ENCODE measurements at regions of chr2 and their contacts with region 1.

Region 1: GRCh38 chr2:98702127-98702802 is 28.7 kb downstream of the MGAT4A start:
- DNase-seq: no peak
- H3K4me3 ChIP-seq: no peak overlapping the region
- H3K4me3 Mint-ChIP-seq: peak overlapping the region; percentile 27 to 76 (median 68)
- H3K27ac ChIP-seq: peak overlapping the region; percentile 29
- H3K27ac Mint-ChIP-seq: peak overlapping the region; percentile 30 to 90 (median 81)
- H3K4me1 ChIP-seq: peaks cover 83% of the 10 kb centered on the region
- H3K4me1 Mint-ChIP-seq: peaks cover 60 to 84% (median 73%) of the 10 kb centered on the region in 4 donors
- H3K27me3 ChIP-seq: no peaks in the 10 kb centered on the region
- H3K27me3 Mint-ChIP-seq: no peaks in the 10 kb centered on the region

Region 2: GRCh38 chr2:98524168-98524567 is 178.1 kb before region 1 on chr2:
- CTCF ChIA-PET with region 1: no interaction called
- POLR2A ChIA-PET with region 1: no interaction called
- intact Hi-C with region 1: no loop called
- DNase-seq: no peak
- H3K4me3 ChIP-seq: no peak overlapping the region
- H3K4me3 Mint-ChIP-seq: no peak overlapping the region
- H3K27ac ChIP-seq: no peak overlapping the region
- H3K27ac Mint-ChIP-seq: peak overlapping the region in 1 of 7 donors; percentile 18
- H3K4me1 ChIP-seq: no peaks in the 10 kb centered on the region
- H3K4me1 Mint-ChIP-seq: peaks cover 7 to 12% (median 11%) of the 10 kb centered on the region in 4 donors
- H3K27me3 ChIP-seq: no peaks in the 10 kb centered on the region
- H3K27me3 Mint-ChIP-seq: no peaks in the 10 kb centered on the region

Region 3: GRCh38 chr2:98654699-98655495 is 47.4 kb before region 1 on chr2:
- CTCF ChIA-PET with region 1: interaction called, 8 read pairs
- POLR2A ChIA-PET with region 1: interaction called, 5 read pairs
- intact Hi-C with region 1: loop called (anchors 5 kb)
- DNase-seq: peak; percentile 47 to 67 (median 50)
- H3K4me3 ChIP-seq: no peak overlapping the region
- H3K4me3 Mint-ChIP-seq: peak overlapping the region; percentile 19 to 73 (median 55)
- H3K27ac ChIP-seq: peak overlapping the region; percentile 55
- H3K27ac Mint-ChIP-seq: peak overlapping the region; percentile 88 to 94 (median 93)
- H3K4me1 ChIP-seq: peaks cover 93% of the 10 kb centered on the region
- H3K4me1 Mint-ChIP-seq: peaks cover 65 to 95% (median 80%) of the 10 kb centered on the region in 4 donors
- H3K27me3 ChIP-seq: no peaks in the 10 kb centered on the region
- H3K27me3 Mint-ChIP-seq: no peaks in the 10 kb centered on the region

Region 4: DNA sequence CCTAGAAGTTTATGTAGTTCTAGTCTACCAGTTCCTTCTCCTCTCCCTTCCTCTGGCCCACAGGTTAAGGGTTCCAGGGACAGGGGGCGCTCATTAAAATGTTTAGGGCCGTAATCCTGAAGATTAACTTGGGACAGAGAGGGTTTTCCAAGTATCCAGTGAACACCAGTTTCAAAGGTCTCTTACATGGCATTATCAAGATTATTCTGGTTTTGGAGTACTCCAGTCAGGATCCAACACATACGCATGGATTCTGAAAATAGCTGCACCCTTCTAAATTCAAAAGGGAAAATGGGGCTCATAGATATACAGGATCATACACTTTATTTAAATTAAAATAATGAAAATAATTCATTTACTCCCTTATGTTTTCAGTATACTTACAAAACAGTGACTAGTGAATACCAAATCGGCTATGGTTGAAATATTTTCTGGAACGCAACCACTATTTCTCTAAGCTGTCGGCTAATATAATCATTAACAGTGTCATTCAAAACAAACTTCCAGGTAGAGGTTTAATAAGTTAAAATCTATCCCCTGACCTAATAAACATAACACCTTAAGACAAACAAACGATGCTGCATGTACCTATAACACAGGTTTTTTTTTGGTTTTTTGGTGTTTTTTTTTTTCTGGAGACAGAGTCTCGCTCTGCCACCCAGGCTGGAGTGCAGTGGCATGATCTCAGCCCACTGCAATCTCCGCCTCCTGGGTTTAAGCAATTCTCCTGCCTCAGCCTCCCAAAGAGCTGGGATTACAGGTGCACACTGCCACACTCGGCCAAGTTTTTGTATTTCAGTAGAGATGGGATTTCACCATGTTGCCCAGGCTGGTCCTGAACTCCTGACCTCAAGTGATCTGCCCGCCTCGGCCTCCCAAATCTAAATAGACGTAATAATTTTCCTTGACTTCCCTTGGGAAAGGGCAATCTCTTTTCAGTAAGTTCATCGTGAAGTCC is 16.1 kb before region 1 on chr2:
- CTCF ChIA-PET with region 1: interaction called, 16 read pairs
- POLR2A ChIA-PET with region 1: interaction called, 5 read pairs
- intact Hi-C with region 1: loop called (anchors 2 kb)
- DNase-seq: no peak
- H3K4me3 ChIP-seq: no peak overlapping the region
- H3K4me3 Mint-ChIP-seq: peak overlapping the region in 3 of 8 donors; percentile 31 to 52 (median 41)
- H3K27ac ChIP-seq: peak overlapping the region; percentile 7
- H3K27ac Mint-ChIP-seq: peak overlapping the region in 6 of 7 donors; percentile 35 to 77 (median 72)
- H3K4me1 ChIP-seq: peaks cover 77% of the 10 kb centered on the region
- H3K4me1 Mint-ChIP-seq: peaks cover 60 to 95% (median 74%) of the 10 kb centered on the region in 4 donors
- H3K27me3 ChIP-seq: no peaks in the 10 kb centered on the region
- H3K27me3 Mint-ChIP-seq: no peaks in the 10 kb centered on the region

Region 5: DNA sequence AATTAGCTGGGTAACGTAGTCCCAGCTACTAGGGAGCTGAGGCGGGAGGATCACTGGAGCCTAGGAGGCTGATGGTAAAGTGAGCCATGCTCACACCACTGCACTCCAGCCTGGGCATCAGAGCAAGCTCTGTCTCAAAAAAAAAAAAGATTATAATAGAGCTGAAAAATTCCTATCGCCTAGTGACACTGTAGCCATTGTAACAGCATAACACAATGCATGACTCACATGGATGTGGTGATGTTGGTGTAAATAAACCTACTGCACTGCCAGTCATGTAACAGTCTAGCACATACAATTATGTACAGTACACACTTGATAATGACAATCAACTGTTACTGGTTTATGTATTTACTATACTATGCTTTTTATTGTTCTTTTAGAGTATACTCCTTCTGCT is 11.0 kb before region 1 on chr2:
- CTCF ChIA-PET with region 1: interaction called, 16 read pairs
- POLR2A ChIA-PET with region 1: interaction called, 5 read pairs
- intact Hi-C with region 1: no loop called
- DNase-seq: peak in 1 of 5 donors; percentile 57
- H3K4me3 ChIP-seq: no peak overlapping the region
- H3K4me3 Mint-ChIP-seq: peak overlapping the region in 6 of 8 donors; percentile 21 to 60 (median 35)
- H3K27ac ChIP-seq: peak overlapping the region; percentile 8
- H3K27ac Mint-ChIP-seq: peak overlapping the region; percentile 36 to 94 (median 76)
- H3K4me1 ChIP-seq: peaks cover 97% of the 10 kb centered on the region
- H3K4me1 Mint-ChIP-seq: peaks cover 68 to 94% (median 81%) of the 10 kb centered on the region in 4 donors
- H3K27me3 ChIP-seq: no peaks in the 10 kb centered on the region
- H3K27me3 Mint-ChIP-seq: no peaks in the 10 kb centered on the region

Region 6: GRCh38 chr2:98713332-98714015 is 11.2 kb after region 1 on chr2:
- CTCF ChIA-PET with region 1: interaction called, 5 read pairs
- POLR2A ChIA-PET with region 1: interaction called, 4 read pairs
- intact Hi-C with region 1: loop called (anchors 1 kb)
- DNase-seq: no peak
- H3K4me3 ChIP-seq: no peak overlapping the region
- H3K4me3 Mint-ChIP-seq: peak overlapping the region in 7 of 8 donors; percentile 25 to 76 (median 65)
- H3K27ac ChIP-seq: no peak overlapping the region
- H3K27ac Mint-ChIP-seq: peak overlapping the region; percentile 42 to 89 (median 81)
- H3K4me1 ChIP-seq: peaks cover 99% of the 10 kb centered on the region
- H3K4me1 Mint-ChIP-seq: peaks cover 72 to 98% (median 87%) of the 10 kb centered on the region in 4 donors
- H3K27me3 ChIP-seq: no peaks in the 10 kb centered on the region
- H3K27me3 Mint-ChIP-seq: no peaks in the 10 kb centered on the region

Region 7: GRCh38 chr2:98749066-98749450 is 46.8 kb after region 1 on chr2:
- CTCF ChIA-PET with region 1: no interaction called
- POLR2A ChIA-PET with region 1: no interaction called
- intact Hi-C with region 1: no loop called
- DNase-seq: no peak
- H3K4me3 ChIP-seq: no peak overlapping the region
- H3K4me3 Mint-ChIP-seq: peak overlapping the region in 3 of 8 donors; percentile 14 to 47 (median 17)
- H3K27ac ChIP-seq: no peak overlapping the region
- H3K27ac Mint-ChIP-seq: peak overlapping the region in 4 of 7 donors; percentile 51 to 77 (median 61)
- H3K4me1 ChIP-seq: peaks cover 29% of the 10 kb centered on the region
- H3K4me1 Mint-ChIP-seq: peaks cover 25 to 67% (median 48%) of the 10 kb centered on the region in 4 donors
- H3K27me3 ChIP-seq: no peaks in the 10 kb centered on the region
- H3K27me3 Mint-ChIP-seq: no peaks in the 10 kb centered on the region

Region 8: GRCh38 chr2:98883780-98884211 is 181.5 kb after region 1 on chr2:
- CTCF ChIA-PET with region 1: no interaction called
- POLR2A ChIA-PET with region 1: no interaction called
- intact Hi-C with region 1: no loop called
- DNase-seq: no peak
- H3K4me3 ChIP-seq: no peak overlapping the region
- H3K4me3 Mint-ChIP-seq: no peak overlapping the region
- H3K27ac ChIP-seq: no peak overlapping the region
- H3K27ac Mint-ChIP-seq: no peak overlapping the region
- H3K4me1 ChIP-seq: no peaks in the 10 kb centered on the region
- H3K4me1 Mint-ChIP-seq: no peaks in the 10 kb centered on the region
- H3K27me3 ChIP-seq: no peaks in the 10 kb centered on the region
- H3K27me3 Mint-ChIP-seq: peaks cover 15 to 26% of the 10 kb centered on the region in 2 donors

Measured in CD4-positive, alpha-beta memory T cell (primary cell).